Activated T-helper 1 cell treated with anti-CD3 and anti-CD28 coated beads, Interleukin-12 subunit alpha, Interleukin-12 subunit beta, Interleukin-2, Interleukin-4 antibody, amounts not matched to agents 30 ng/mL and 10 ng/mL and 1 ng/mL, durations not matched to agents 14 hours and 24 hours and 36 hours (primary cell): ENCODE measurements at regions of chr4 and their contacts with region 1.

Region 1: DNA sequence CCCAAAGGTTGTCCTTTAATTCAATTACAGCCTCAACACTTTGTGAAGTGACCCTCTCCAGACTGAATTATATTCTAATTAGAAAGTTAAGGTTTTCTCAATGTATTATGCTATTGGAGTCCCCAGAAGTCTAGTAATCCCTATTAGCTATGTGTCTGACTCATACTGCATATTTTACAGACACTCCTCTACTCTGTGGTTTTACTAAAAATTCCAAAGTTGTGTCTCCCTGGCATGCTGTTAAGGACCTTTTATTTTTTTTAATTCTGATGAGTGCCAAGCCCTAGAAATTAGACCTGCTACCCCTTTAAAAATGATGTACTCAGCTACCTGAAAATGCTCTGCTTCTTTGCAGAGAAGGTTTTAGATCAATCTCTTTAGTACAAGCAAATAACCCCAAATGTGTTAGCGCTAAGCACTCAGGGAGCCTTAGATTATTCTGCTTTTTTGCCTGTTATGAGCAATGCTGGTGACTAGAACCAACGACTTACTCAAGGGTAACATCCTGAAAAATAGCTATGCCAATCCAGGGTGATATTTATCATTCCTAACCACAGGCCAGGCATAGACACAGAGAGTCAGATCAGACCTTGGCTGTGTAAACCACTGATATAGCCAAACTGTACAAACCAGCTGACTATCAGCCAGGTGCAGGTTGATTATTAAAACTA is 26.1 kb upstream of the CXCL13 start:
- DNase-seq: no peak
- H3K4me3 Mint-ChIP-seq: no peak overlapping the region
- H3K27ac Mint-ChIP-seq: peak overlapping the region; percentile 72
- H3K4me1 Mint-ChIP-seq: peaks cover 40% of the 10 kb centered on the region
- H3K27me3 Mint-ChIP-seq: no peaks in the 10 kb centered on the region

Region 2: GRCh38 chr4:77036206-77036605 is 543.3 kb before region 1 on chr4:
- intact Hi-C with region 1: loop called (anchors 1 kb)
- DNase-seq: no peak
- H3K4me3 Mint-ChIP-seq: no peak overlapping the region
- H3K27ac Mint-ChIP-seq: no peak overlapping the region
- H3K4me1 Mint-ChIP-seq: peaks cover 13% of the 10 kb centered on the region
- H3K27me3 Mint-ChIP-seq: peaks cover 10% of the 10 kb centered on the region

Region 3: GRCh38 chr4:77560170-77560569 is 19.4 kb before region 1 on chr4:
- intact Hi-C with region 1: loop called (anchors 2 kb)
- DNase-seq: no peak
- H3K4me3 Mint-ChIP-seq: no peak overlapping the region
- H3K27ac Mint-ChIP-seq: no peak overlapping the region
- H3K4me1 Mint-ChIP-seq: no peaks in the 10 kb centered on the region
- H3K27me3 Mint-ChIP-seq: no peaks in the 10 kb centered on the region

Region 4: DNA sequence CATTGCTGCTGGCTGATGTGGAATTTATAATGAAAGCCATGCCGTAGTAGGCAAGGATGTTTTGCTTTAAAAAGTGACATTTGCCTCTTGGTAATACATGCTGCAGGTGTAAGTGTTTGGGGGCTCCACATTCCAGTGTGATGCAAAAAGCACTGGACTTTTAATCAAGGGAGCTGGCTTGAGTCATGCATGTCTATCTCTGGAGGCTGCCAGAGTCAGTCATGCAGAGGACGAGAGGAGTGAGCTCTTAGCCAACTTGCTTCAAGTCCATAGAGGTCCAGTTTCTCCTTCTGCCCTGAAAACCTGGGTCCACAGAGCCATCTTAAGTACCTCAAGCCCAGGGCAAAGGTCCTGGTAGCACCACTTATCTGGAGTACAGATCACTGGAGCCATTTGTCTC is 14.5 kb after region 1 on chr4:
- intact Hi-C with region 1: loop called (anchors 1 kb)
- DNase-seq: no peak
- H3K4me3 Mint-ChIP-seq: peak overlapping the region; percentile 15
- H3K27ac Mint-ChIP-seq: peak overlapping the region; percentile 82
- H3K4me1 Mint-ChIP-seq: peaks cover 53% of the 10 kb centered on the region
- H3K27me3 Mint-ChIP-seq: peaks cover 1% of the 10 kb centered on the region

Region 5: GRCh38 chr4:77600521-77601451 is 21.2 kb after region 1 on chr4:
- intact Hi-C with region 1: loop called (anchors 1 kb)
- DNase-seq: no peak
- H3K4me3 Mint-ChIP-seq: no peak overlapping the region
- H3K27ac Mint-ChIP-seq: no peak overlapping the region
- H3K4me1 Mint-ChIP-seq: peaks cover 33% of the 10 kb centered on the region
- H3K27me3 Mint-ChIP-seq: peaks cover 7% of the 10 kb centered on the region

Region 6: DNA sequence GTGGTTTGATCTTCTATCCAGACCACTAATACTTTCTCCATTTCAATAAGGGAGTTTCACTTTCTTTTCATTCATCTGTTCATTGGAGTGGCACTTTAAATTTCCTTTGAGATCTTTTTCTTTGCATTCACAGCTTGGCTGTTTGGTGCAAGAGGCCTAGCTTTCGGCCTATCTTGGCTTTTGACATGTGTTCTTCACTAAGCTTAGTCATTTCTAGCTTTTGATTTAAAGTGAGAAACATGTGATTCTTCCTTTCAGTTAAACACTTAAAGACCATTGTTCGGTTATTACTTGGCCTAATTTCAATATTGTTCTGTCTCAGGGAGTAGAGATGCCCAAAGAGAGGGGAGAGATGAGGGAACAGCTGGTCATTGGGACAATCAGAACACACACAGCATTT is 50.3 kb after region 1 on chr4:
- intact Hi-C with region 1: loop called (anchors 1 kb)
- DNase-seq: no peak
- H3K4me3 Mint-ChIP-seq: no peak overlapping the region
- H3K27ac Mint-ChIP-seq: peak overlapping the region; percentile 12
- H3K4me1 Mint-ChIP-seq: peaks cover 22% of the 10 kb centered on the region
- H3K27me3 Mint-ChIP-seq: no peaks in the 10 kb centered on the region